ENCODE measurements at regions of chr3 and their contacts with region 1.

Region 1: DNA sequence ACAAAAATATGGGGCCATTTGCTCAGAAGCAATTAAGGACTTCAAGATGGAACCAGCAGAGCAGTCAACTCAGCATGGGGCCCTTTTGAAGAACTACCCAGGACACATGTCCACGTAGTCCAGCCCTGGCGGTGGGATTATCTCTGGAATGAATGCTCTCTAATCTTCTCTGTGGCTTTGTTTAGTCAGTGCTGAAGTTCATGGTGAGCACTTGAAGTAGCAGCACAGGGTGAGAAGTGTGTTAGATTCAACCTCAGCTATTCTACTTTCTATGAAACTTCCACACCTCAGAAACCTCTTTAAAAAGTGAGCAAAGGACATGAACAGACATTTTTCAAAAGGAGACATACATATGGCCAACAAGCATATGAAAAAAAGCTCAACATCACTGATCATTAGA is 74.4 kb downstream of the THRB start:
- DNase-seq: no peak
- ATAC-seq: no peak
- H3K4me3 ChIP-seq: no peak overlapping the region
- H3K27ac ChIP-seq: no peak overlapping the region
- H3K4me1 ChIP-seq: no peaks in the 10 kb centered on the region
- H3K27me3 ChIP-seq: no peaks in the 10 kb centered on the region
- CTCF ChIP-seq: no peak
- POLR2A ChIP-seq: no peak
- RAD21 ChIP-seq: no peak

Region 2: GRCh38 chr3:24160424-24161095 is 259.7 kb before region 1 on chr3:
- CTCF ChIA-PET with region 1: no interaction called
- POLR2A ChIA-PET with region 1: no interaction called
- dilution Hi-C with region 1: no loop called
- in situ Hi-C with region 1: no loop called
- intact Hi-C with region 1: no loop called
- DNase-seq: peak; percentile 29
- ATAC-seq: peak; percentile 69; the same call in 1 of the 2 replicates
- H3K4me3 ChIP-seq: no peak overlapping the region
- H3K27ac ChIP-seq: no peak overlapping the region
- H3K4me1 ChIP-seq: peaks cover 3% of the 10 kb centered on the region
- H3K27me3 ChIP-seq: peaks cover 3% of the 10 kb centered on the region
- CTCF ChIP-seq: no peak
- POLR2A ChIP-seq: no peak
- RAD21 ChIP-seq: no peak

Region 3: DNA sequence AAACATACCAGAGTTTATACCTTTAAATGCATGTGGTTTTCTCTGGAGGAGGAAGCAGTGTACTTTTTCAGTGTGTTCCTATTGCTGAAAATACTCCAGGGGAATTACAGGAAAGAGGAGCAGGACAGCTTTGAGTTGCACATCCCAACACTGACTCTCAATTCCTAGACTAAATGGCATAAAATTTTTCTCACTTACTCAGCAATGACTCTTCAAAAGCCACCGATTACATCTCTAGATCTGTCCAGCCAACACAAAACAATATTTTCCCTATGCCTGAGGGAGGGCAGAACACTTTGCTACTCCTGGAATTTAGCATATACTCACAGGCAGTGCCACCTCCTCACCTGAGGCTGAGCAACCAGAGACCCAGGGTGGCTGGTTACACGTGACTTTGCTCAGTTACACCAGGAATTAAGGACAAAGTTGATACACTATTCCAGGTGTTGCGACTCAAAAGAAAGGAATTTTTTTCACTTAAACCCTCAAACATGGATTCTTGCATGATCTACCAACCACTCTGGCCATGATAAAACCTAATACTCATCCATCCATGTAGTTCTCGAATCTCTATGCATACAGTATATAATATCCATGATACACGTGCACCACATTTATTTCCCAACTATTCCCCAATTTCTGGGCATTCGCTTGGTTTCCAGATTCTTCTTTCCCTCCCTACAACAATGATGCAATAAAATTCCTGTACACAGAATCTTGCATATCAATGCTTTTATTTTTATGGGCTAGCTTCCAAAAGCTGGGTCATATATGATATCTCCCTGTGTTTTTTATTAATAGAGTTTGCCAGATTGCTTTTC is 120.2 kb before region 1 on chr3:
- CTCF ChIA-PET with region 1: no interaction called
- POLR2A ChIA-PET with region 1: no interaction called
- dilution Hi-C with region 1: no loop called
- in situ Hi-C with region 1: no loop called
- intact Hi-C with region 1: no loop called
- DNase-seq: peak; percentile 11
- ATAC-seq: peak; percentile 62
- H3K4me3 ChIP-seq: no peak overlapping the region
- H3K27ac ChIP-seq: no peak overlapping the region
- H3K4me1 ChIP-seq: no peaks in the 10 kb centered on the region
- H3K27me3 ChIP-seq: no peaks in the 10 kb centered on the region
- CTCF ChIP-seq: no peak
- POLR2A ChIP-seq: no peak
- RAD21 ChIP-seq: no peak

Region 4: GRCh38 chr3:24351779-24352469 is 68.3 kb before region 1 on chr3:
- CTCF ChIA-PET with region 1: no interaction called
- POLR2A ChIA-PET with region 1: no interaction called
- dilution Hi-C with region 1: no loop called
- in situ Hi-C with region 1: no loop called
- intact Hi-C with region 1: no loop called
- DNase-seq: no peak
- ATAC-seq: no peak
- H3K4me3 ChIP-seq: no peak overlapping the region
- H3K27ac ChIP-seq: no peak overlapping the region
- H3K4me1 ChIP-seq: no peaks in the 10 kb centered on the region
- H3K27me3 ChIP-seq: peaks cover 2% of the 10 kb centered on the region; the same call in 1 of the 2 replicates
- CTCF ChIP-seq: no peak
- POLR2A ChIP-seq: no peak
- RAD21 ChIP-seq: no peak

Region 5: DNA sequence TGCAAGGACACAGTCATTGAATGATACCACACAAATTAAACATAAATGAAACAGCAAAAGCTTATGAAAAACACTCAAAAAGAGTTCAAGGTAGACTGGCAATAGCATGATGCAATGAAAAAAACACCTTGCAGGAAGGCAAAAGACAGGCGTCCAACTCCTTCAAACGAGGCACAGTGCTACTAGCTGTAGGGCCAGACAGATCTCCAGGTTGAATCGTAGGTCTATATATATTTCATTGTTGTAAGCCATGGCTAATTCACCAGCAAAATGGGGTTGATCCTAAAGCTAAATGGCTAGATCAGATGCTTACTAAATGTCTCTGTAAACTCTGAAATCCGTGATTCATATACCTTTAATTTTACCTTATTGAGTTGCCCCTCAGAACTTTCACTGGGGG is 19.8 kb before region 1 on chr3:
- CTCF ChIA-PET with region 1: no interaction called
- POLR2A ChIA-PET with region 1: no interaction called
- dilution Hi-C with region 1: no loop called
- in situ Hi-C with region 1: no loop called
- intact Hi-C with region 1: loop called (anchors 1 kb)
- DNase-seq: no peak
- ATAC-seq: no peak
- H3K4me3 ChIP-seq: no peak overlapping the region
- H3K27ac ChIP-seq: no peak overlapping the region
- H3K4me1 ChIP-seq: no peaks in the 10 kb centered on the region
- H3K27me3 ChIP-seq: no peaks in the 10 kb centered on the region
- CTCF ChIP-seq: no peak
- POLR2A ChIP-seq: no peak
- RAD21 ChIP-seq: no peak

Measured in IMR-90 (cell line).